Transverse colon (tissue), 4 donors: ENCODE measurements at regions of chr5 and their contacts with region 1.

Region 1: GRCh38 chr5:78326930-78327329 is 32.4 kb upstream of the AP3B1 start:
- DNase-seq: no peak
- H3K4me3 ChIP-seq: no peak overlapping the region
- H3K27ac ChIP-seq: no peak overlapping the region
- H3K4me1 ChIP-seq: no peaks in the 10 kb centered on the region
- H3K27me3 ChIP-seq: no peaks in the 10 kb centered on the region
- CTCF ChIP-seq: no peak
- EP300 ChIP-seq: no peak
- POLR2A ChIP-seq: no peak

Region 2: DNA sequence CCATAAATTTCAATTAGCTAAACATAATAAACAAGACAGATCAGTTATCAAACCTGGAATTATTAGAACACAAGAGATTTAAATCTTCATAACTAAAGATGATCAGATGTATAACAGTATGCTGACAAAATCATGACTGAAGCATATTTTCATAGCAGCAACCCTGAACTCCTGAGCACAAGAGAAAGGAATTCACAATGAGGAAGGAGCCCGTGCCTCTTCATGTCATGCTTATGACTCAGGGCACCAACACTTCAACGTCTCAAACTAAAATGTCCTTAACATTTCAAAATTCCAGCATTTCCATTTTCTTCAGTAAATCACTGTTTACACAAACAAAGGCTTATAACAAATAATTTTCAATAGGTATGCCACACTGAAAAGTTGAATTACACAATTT is 39.1 kb before region 1 on chr5:
- in situ Hi-C with region 1: no loop called
- intact Hi-C with region 1: no loop called
- DNase-seq: no peak
- H3K4me3 ChIP-seq: no peak overlapping the region
- H3K27ac ChIP-seq: no peak overlapping the region
- H3K4me1 ChIP-seq: peaks cover 0 to 19% (median 0%) of the 10 kb centered on the region in 4 donors
- H3K27me3 ChIP-seq: no peaks in the 10 kb centered on the region
- CTCF ChIP-seq: no peak
- EP300 ChIP-seq: no peak
- POLR2A ChIP-seq: no peak

Region 3: DNA sequence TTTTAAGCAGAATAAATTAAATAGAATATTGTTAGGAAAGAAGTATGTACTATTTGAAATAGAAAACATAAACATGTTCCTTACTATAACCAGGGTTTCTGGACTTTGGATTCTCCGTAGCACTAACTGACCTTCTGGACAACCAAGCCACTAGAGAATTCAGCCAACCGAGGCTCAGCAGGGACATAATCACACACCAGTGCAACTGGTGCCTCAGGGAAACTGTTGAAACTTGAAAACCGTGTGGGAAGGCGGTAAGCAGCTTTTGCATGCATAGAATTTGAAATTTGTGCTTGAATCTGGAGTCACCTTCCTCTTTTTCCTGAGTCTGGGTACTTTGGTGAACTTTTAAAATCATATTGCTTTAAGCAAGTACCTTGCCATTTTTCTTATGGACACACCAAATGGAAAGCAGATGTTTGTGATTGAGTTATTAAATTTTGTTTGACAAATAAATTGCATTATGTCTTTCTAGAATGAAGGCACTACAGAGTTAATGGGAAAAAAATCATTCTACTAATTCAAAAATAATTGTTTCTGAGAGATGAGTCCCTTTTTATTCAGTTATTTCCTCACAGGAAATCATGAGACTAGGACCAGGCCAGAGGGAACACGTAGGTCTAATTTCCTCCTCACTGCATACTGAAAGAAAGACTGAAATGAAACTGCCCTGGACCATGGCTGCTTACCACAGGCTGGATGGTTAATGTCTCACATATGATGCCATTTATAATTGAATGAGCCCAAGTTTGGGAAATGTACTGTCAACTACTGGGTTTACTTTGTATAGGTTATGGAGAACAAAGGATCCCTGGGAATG is 12.9 kb after region 1 on chr5:
- in situ Hi-C with region 1: no loop called
- intact Hi-C with region 1: loop called (anchors 1 kb)
- DNase-seq: no peak
- H3K4me3 ChIP-seq: no peak overlapping the region
- H3K27ac ChIP-seq: no peak overlapping the region
- H3K4me1 ChIP-seq: no peaks in the 10 kb centered on the region
- H3K27me3 ChIP-seq: no peaks in the 10 kb centered on the region
- CTCF ChIP-seq: no peak
- EP300 ChIP-seq: no peak
- POLR2A ChIP-seq: no peak